H1 (cell line): ENCODE measurements at regions of chr3 and their contacts with region 1.

Region 1: GRCh38 chr3:28268989-28269388 is 27.6 kb downstream of the CMC1 start:
- DNase-seq: no peak
- H3K4me3 ChIP-seq: no peak overlapping the region
- H3K27ac ChIP-seq: no peak overlapping the region
- H3K4me1 ChIP-seq: no peaks in the 10 kb centered on the region
- H3K27me3 ChIP-seq: no peaks in the 10 kb centered on the region
- CTCF ChIP-seq: peak in 2 of 3 experiments; percentile 12 to 32; a peak in 1 of 4 replicates
- EP300 ChIP-seq: no peak
- POLR2A ChIP-seq: no peak
- RAD21 ChIP-seq: peak in 1 of 2 experiments; percentile 13; a peak in 1 of 4 replicates

Region 2: GRCh38 chr3:28279770-28280169 is 10.8 kb after region 1 on chr3:
- CTCF ChIA-PET with region 1: interaction called, 14 read pairs
- POLR2A ChIA-PET with region 1: no interaction called
- DNase-seq: no peak
- H3K4me3 ChIP-seq: no peak overlapping the region
- H3K27ac ChIP-seq: no peak overlapping the region
- H3K4me1 ChIP-seq: no peaks in the 10 kb centered on the region
- H3K27me3 ChIP-seq: no peaks in the 10 kb centered on the region
- CTCF ChIP-seq: no peak
- EP300 ChIP-seq: no peak
- POLR2A ChIP-seq: no peak
- RAD21 ChIP-seq: no peak

Region 3: GRCh38 chr3:28286595-28286994 is 17.6 kb after region 1 on chr3:
- CTCF ChIA-PET with region 1: interaction called, 14 read pairs
- POLR2A ChIA-PET with region 1: no interaction called
- DNase-seq: no peak
- H3K4me3 ChIP-seq: no peak overlapping the region
- H3K27ac ChIP-seq: no peak overlapping the region
- H3K4me1 ChIP-seq: no peaks in the 10 kb centered on the region
- H3K27me3 ChIP-seq: no peaks in the 10 kb centered on the region
- CTCF ChIP-seq: peak in 2 of 3 experiments; percentile 25 to 47; a peak in 2 of 4 replicates
- EP300 ChIP-seq: no peak
- POLR2A ChIP-seq: no peak
- RAD21 ChIP-seq: peak; percentile 59 to 60